HepG2 (cell line): ENCODE measurements at regions of chr2 and their contacts with region 1.

Region 1: GRCh38 chr2:235595422-235596010 is 101.7 kb downstream of the AGAP1 start:
- DNase-seq: peak; percentile 68
- ATAC-seq: peak; percentile 53
- H3K4me3 ChIP-seq: no peak overlapping the region
- H3K27ac ChIP-seq: no peak overlapping the region
- H3K4me1 ChIP-seq: peaks cover 44% of the 10 kb centered on the region
- H3K27me3 ChIP-seq: no peaks in the 10 kb centered on the region
- CTCF ChIP-seq: peak; percentile 94
- EP300 ChIP-seq: no peak
- POLR2A ChIP-seq: no peak
- RAD21 ChIP-seq: peak; percentile 78

Region 2: DNA sequence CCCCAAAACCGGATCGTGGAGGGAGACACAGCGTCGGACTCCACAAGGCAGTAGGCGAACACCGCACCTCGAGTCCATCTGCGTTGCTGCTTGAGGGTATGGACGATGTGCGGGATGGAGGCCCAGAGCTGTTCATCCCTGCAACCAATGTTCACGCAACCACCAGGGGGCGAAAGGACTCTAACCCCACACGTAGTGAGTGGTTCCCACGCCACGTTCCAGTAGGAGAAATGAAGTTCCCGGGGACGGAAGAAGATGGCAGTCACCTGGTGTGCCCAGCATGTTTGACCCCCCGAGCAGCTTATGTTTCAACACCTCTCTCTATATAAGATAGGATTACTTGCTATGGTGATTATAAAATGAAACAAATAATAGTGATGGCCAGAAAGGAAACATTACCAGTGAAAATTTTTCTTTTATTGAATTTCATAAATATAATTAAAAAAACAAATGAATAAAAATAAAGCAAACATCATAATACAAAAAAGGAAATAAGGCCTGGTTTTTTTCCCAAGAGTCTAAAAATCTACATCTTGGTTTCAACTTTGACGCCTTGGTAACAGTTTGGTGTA is 459.4 kb before region 1 on chr2:
- CTCF ChIA-PET with region 1: interaction called, 36 read pairs
- POLR2A ChIA-PET with region 1: no interaction called
- in situ Hi-C with region 1: loop called (anchors 5 kb)
- intact Hi-C with region 1: no loop called
- DNase-seq: peak; percentile 78
- ATAC-seq: peak; percentile 95
- H3K4me3 ChIP-seq: no peak overlapping the region
- H3K27ac ChIP-seq: no peak overlapping the region
- H3K4me1 ChIP-seq: no peaks in the 10 kb centered on the region
- H3K27me3 ChIP-seq: peaks cover 0 to 40% of the 10 kb centered on the region in 2 experiments; a peak in 4 of 5 replicates
- CTCF ChIP-seq: peak; percentile 87
- EP300 ChIP-seq: no peak
- POLR2A ChIP-seq: no peak
- RAD21 ChIP-seq: peak; percentile 88

Region 3: DNA sequence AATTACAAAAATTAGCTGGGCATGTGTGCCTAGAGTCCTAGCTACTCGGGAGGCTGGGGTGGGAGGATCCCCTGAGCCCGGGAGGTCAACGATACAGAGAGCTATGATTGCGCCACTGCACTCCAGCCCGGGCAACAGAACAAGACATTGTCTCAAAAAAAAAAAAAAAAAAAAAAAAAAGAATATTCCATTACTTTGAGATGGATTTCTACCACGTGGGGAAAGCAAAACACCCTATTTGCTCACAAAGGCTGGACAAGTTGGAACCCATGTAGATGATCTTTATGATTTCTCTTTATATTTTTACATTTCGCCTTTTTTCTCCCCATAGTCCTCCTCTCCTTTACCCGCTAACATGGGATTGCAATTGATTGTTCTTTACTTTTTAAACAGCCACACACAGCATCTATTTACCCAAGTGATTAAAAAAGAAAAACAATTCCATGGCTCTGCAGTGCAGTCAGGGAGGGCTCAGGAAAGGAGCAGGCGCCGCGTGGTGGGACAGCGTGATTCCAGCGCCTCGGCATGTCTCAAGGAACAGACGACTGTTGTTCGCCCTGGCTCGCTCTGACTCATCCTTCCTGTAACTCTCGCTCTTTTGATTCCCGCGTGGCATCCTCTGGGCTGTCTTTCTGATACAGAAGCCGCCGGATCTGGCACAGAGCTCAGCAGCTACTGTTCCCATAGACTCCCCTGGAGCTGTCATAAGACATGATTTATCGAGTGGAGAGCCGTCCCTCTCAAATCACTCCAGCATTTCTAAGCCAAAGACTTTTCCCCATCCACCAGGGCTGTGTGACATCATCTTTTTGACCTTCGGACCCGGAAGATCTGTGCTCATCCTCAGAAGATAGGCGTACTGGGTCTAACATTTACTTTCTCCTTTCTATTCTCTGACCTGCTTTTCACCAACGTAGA is 332.1 kb before region 1 on chr2:
- CTCF ChIA-PET with region 1: no interaction called
- POLR2A ChIA-PET with region 1: no interaction called
- in situ Hi-C with region 1: no loop called
- intact Hi-C with region 1: loop called (anchors 10 kb)
- DNase-seq: peak; percentile 86
- ATAC-seq: peak; percentile 69
- H3K4me3 ChIP-seq: peak overlapping the region; percentile 6 to 60 (median 11); a peak in 3 of 6 replicates
- H3K27ac ChIP-seq: no peak overlapping the region
- H3K4me1 ChIP-seq: peaks cover 62% of the 10 kb centered on the region
- H3K27me3 ChIP-seq: peaks cover 2 to 29% of the 10 kb centered on the region in 2 experiments; a peak in 3 of 5 replicates
- CTCF ChIP-seq: no peak
- EP300 ChIP-seq: peak in 1 of 2 experiments; percentile 11; a peak in 1 of 4 replicates
- POLR2A ChIP-seq: 0 out of 4 replicates have a peak, but pooled peaks of 1 of the 2 experiments have one; percentile 21
- RAD21 ChIP-seq: no peak

Region 4: DNA sequence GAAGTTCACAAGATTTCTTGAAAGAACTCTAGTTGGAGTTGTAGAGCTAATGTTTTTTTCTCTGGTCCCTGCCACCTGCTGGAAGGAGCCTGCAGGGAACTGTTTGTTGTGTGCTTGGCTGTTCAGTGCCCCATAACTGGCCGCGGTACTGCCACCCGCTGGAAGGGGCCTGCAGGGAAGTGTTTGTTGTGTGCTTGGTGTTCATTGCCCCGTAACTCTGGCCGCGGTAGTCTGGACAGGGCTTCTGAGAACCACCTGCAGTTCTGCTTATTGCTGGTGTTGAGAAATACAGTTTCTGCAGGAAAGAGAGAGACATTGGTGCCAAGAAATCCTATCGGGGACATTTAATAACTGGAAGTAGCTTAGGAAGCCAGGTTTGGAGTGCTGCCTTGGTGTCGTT is 43.6 kb before region 1 on chr2:
- CTCF ChIA-PET with region 1: interaction called, 5 read pairs
- POLR2A ChIA-PET with region 1: no interaction called
- in situ Hi-C with region 1: no loop called
- intact Hi-C with region 1: loop called (anchors 2 kb)
- DNase-seq: peak; percentile 81
- ATAC-seq: peak; percentile 98
- H3K4me3 ChIP-seq: no peak overlapping the region
- H3K27ac ChIP-seq: no peak overlapping the region
- H3K4me1 ChIP-seq: peaks cover 56% of the 10 kb centered on the region
- H3K27me3 ChIP-seq: no peaks in the 10 kb centered on the region
- CTCF ChIP-seq: peak; percentile 86
- EP300 ChIP-seq: no peak
- POLR2A ChIP-seq: no peak
- RAD21 ChIP-seq: peak; percentile 96

Region 5: GRCh38 chr2:235746257-235747084 is 151.0 kb after region 1 on chr2:
- CTCF ChIA-PET with region 1: interaction called, 53 read pairs
- POLR2A ChIA-PET with region 1: no interaction called
- in situ Hi-C with region 1: loop called (anchors 5 kb)
- intact Hi-C with region 1: loop called (anchors 1 kb)
- DNase-seq: peak; percentile 81
- ATAC-seq: peak; percentile 95
- H3K4me3 ChIP-seq: no peak overlapping the region
- H3K27ac ChIP-seq: no peak overlapping the region
- H3K4me1 ChIP-seq: peaks cover 7% of the 10 kb centered on the region
- H3K27me3 ChIP-seq: no peaks in the 10 kb centered on the region
- CTCF ChIP-seq: peak; percentile 87
- EP300 ChIP-seq: no peak
- POLR2A ChIP-seq: no peak
- RAD21 ChIP-seq: peak; percentile 76